ENCODE measurements at regions of chr9 and their contacts with region 1.

Region 1: GRCh38 chr9:14353222-14354056 is 39.5 kb upstream of the NFIB start:
- DNase-seq: peak; percentile 92 to 96 (median 94)
- ATAC-seq: peak; percentile 57 to 75 (median 72)
- H3K4me3 ChIP-seq: peak overlapping the region in 10 of 12 donors; percentile 4 to 48 (median 24)
- H3K27ac ChIP-seq: peak overlapping the region; percentile 61 to 94 (median 87)
- H3K4me1 ChIP-seq: peaks cover 4 to 69% (median 38%) of the 10 kb centered on the region in 12 donors
- H3K27me3 ChIP-seq: peaks cover 0 to 13% (median 0%) of the 10 kb centered on the region in 9 donors
- CTCF ChIP-seq: peak; percentile 79 to 96 (median 92)
- POLR2A ChIP-seq: no peak

Region 2: DNA sequence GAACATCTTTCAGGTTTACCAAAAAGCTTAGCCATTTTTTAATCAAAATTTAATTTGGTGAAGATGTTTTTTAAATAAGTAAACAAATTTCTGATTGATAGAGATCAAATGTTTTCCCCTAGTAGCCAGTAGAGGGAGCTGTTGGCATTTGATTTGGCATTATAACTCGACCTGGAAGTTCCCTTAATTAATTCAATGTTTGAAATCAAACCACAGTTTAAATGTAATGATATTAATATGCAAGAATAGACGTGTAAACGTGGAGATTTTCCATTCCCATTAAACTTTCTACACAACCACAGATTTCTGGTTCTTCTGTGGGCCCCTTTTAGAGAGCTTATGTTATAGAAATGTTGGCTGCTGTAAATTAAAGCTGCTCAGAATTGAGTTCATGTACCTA is 925.9 kb before region 1 on chr9:
- intact Hi-C with region 1: loop called (anchors 1 to 5 kb)
- DNase-seq: no peak
- ATAC-seq: peak in 2 of 4 donors; percentile 42 to 47
- H3K4me3 ChIP-seq: peak overlapping the region in 1 of 12 donors; percentile 12
- H3K27ac ChIP-seq: peak overlapping the region in 9 of 12 donors; percentile 0 to 63 (median 33)
- H3K4me1 ChIP-seq: peaks cover 0 to 23% (median 13%) of the 10 kb centered on the region in 12 donors
- H3K27me3 ChIP-seq: no peaks in the 10 kb centered on the region
- CTCF ChIP-seq: peak; percentile 68 to 88 (median 82)
- POLR2A ChIP-seq: no peak

Region 3: DNA sequence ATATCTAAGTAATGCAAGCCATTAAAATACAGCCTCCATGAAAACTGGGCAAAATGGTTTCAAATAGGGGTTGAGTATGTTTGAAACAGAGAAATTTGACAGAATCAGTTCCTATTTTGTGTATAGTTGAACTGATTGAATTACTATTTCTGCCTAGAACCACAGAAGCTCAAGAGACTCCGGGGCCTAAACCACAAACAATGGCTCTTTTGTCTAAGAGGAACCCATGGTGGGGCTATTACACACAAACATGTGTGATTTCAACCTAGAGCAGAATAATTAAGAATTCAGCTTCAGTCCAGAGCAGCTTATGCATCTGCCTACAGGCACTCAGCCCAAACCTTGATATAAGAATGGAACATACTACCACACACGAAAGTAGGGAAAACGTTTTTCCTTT is 902.7 kb before region 1 on chr9:
- intact Hi-C with region 1: loop called in 5 of 10 experiments (anchors 5 kb)
- DNase-seq: no peak
- ATAC-seq: peak in 1 of 4 donors; percentile 26
- H3K4me3 ChIP-seq: no peak overlapping the region
- H3K27ac ChIP-seq: no peak overlapping the region
- H3K4me1 ChIP-seq: peaks cover 0 to 47% (median 25%) of the 10 kb centered on the region in 12 donors
- H3K27me3 ChIP-seq: no peaks in the 10 kb centered on the region
- CTCF ChIP-seq: no peak
- POLR2A ChIP-seq: no peak

Region 4: DNA sequence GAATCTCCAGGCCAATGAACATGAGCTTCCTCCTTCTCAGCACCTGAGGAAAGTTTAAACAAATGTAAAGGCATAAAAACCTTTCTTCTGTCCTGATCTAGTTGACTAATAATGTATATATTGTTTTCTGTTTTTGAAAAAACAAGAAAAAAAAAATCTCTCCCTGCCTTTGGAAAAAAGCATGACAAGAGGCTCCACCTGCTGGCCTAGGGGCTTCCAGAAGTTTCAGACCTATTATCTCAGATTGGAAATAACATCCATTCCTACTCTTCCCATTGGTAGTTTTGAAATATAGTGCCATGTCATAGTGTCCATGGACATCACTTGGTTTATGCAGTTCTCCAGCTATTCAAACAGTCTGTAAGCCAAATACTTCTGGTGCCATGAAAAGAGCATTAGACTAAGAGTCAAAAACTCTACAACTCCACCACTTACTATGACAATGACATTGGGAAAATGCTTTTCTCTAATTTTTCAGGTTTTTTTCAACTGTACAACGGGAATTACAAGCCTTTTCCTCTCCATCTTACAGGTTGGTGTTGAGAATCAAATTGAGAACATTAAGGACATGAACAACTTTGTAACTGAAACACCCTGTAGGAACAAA is 664.3 kb before region 1 on chr9:
- intact Hi-C with region 1: loop called in 3 of 10 experiments (anchors 10 kb)
- DNase-seq: peak in 1 of 5 donors; percentile 32
- ATAC-seq: peak in 1 of 4 donors; percentile 23
- H3K4me3 ChIP-seq: no peak overlapping the region
- H3K27ac ChIP-seq: peak overlapping the region in 6 of 12 donors; percentile 1 to 33 (median 16)
- H3K4me1 ChIP-seq: peaks cover 0 to 30% (median 12%) of the 10 kb centered on the region in 12 donors
- H3K27me3 ChIP-seq: no peaks in the 10 kb centered on the region
- CTCF ChIP-seq: peak; percentile 35 to 64 (median 54)
- POLR2A ChIP-seq: no peak

Region 5: DNA sequence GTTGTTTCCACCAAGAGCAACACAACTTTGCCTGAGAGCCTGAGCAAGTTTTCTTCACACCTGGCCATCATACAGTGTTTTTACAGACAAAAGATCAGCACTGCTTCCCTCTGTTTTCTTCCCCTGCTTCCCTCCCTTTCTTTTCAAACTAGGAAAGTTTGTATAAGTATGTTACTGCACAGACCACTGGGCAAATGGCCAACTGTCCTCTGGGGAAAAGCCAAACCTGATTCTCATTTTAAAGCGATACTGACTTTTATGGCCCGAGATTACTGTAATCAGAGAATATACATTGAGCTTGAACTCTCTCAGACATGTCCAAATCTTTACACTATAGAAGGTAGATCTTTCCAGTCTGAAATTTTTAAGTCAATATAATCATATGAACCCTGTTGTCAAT is 454.5 kb before region 1 on chr9:
- intact Hi-C with region 1: loop called in 2 of 10 experiments (anchors 5 kb)
- DNase-seq: peak in 4 of 5 donors; percentile 30 to 44 (median 36)
- ATAC-seq: no peak
- H3K4me3 ChIP-seq: no peak overlapping the region
- H3K27ac ChIP-seq: peak overlapping the region in 11 of 12 donors; percentile 42 to 84 (median 66)
- H3K4me1 ChIP-seq: peaks cover 6 to 66% (median 24%) of the 10 kb centered on the region in 12 donors
- H3K27me3 ChIP-seq: no peaks in the 10 kb centered on the region
- CTCF ChIP-seq: no peak
- POLR2A ChIP-seq: no peak

Region 6: DNA sequence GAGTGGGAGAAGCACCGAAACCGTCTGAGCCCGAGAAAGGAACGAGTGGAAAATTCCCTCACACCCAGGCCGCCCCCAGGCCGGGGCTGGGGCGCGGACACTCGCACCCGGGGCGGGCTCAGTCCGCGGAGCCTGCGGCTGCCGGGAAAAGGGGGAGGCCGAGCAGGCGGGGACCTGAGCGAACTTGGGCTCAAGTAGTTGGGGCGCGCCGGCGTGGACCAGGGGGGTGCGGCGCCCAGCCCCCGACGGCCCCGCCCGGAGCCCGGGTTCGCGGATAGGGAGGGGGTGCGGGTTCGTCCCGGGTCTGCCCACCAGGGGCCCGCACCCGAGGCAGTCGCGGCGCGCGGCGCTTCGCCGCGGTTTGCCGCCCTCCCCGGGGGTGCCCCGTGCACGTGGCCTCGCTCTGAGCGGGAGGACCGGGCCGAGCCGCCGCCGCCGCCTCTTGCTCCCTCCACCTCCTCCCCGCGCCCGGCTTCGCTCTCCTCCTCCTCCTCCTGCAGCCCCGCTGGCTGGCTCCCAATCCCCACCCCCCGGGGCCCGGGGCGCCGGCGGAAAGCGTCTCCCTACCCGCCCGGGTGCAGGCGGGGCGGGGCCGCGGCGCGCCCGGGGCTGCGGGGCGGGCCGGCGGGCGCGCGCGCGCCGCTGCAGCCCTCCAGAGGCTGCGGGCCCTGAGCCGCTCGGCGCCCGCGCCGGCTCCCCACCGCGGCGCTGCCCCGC is 38.4 kb before region 1 on chr9:
- intact Hi-C with region 1: loop called in 6 of 10 experiments (anchors 2 to 5 kb)
- DNase-seq: peak; percentile 96 to 98 (median 97)
- ATAC-seq: peak; percentile 67 to 87 (median 80)
- H3K4me3 ChIP-seq: peak overlapping the region; percentile 66 to 90 (median 82)
- H3K27ac ChIP-seq: peak overlapping the region; percentile 93 to 100 (median 99)
- H3K4me1 ChIP-seq: peaks cover 5 to 53% (median 34%) of the 10 kb centered on the region in 12 donors
- H3K27me3 ChIP-seq: peaks cover 0 to 47% (median 0%) of the 10 kb centered on the region in 9 donors
- CTCF ChIP-seq: no peak
- POLR2A ChIP-seq: peak; percentile 40 to 82

Region 7: GRCh38 chr9:14428781-14429230 is 75.4 kb after region 1 on chr9:
- intact Hi-C with region 1: loop called in 3 of 10 experiments (anchors 5 kb)
- DNase-seq: peak; percentile 67 to 80 (median 74)
- ATAC-seq: peak; percentile 69 to 80 (median 76)
- H3K4me3 ChIP-seq: no peak overlapping the region
- H3K27ac ChIP-seq: peak overlapping the region in 7 of 12 donors; percentile 23 to 54 (median 37)
- H3K4me1 ChIP-seq: peaks cover 0 to 40% (median 17%) of the 10 kb centered on the region in 12 donors
- H3K27me3 ChIP-seq: no peaks in the 10 kb centered on the region
- CTCF ChIP-seq: peak; percentile 69 to 86 (median 80)
- POLR2A ChIP-seq: no peak

Region 8: DNA sequence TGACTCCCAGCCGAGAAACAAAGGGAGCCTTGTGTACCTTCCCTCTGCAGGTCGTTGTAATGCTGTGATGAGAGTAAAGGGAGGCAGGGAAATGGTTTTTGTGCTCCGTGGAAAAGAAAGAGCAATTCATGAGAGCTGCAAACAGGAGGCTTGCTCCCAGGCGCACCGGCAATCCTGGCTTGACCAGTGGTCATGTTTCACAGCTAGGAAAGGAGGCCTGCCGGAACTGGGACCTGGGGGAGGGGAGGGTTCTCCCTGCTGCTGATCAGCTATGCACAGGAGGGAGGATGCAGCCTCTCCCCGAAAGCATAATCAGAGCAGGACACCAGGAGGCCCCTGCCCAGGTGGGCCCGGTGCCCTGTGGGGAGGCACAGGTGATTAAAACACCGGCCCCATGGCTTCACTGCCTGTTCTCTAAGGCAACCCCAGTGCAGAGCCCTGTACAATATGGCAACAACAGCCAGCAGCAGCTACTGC is 208.5 kb after region 1 on chr9:
- intact Hi-C with region 1: no loop called
- DNase-seq: no peak
- ATAC-seq: no peak
- H3K4me3 ChIP-seq: no peak overlapping the region
- H3K27ac ChIP-seq: no peak overlapping the region
- H3K4me1 ChIP-seq: no peaks in the 10 kb centered on the region
- H3K27me3 ChIP-seq: no peaks in the 10 kb centered on the region
- CTCF ChIP-seq: no peak
- POLR2A ChIP-seq: no peak

Measured in heart left ventricle (tissue), 16 donors.